CD4-positive, alpha-beta memory T cell (primary cell): ENCODE measurements at regions of chr12 and their contacts with region 1.

Region 1: GRCh38 chr12:93441617-93442410 is at the start of gene UBE2N:
- DNase-seq: peak; percentile 95 to 97 (median 97)
- H3K4me3 ChIP-seq: peak within 1 kb of the TSS; percentile 90 to 98
- H3K4me3 Mint-ChIP-seq: peak within 1 kb of the TSS; percentile 94 to 98 (median 97)
- H3K27ac ChIP-seq: peak within 1 kb of the TSS; percentile 95
- H3K27ac Mint-ChIP-seq: peak within 1 kb of the TSS; percentile 94 to 100 (median 99)
- H3K4me1 ChIP-seq: peaks cover 48% of the 10 kb centered on the region
- H3K4me1 Mint-ChIP-seq: peaks cover 36 to 51% (median 45%) of the 10 kb centered on the region in 4 donors
- H3K27me3 ChIP-seq: no peaks in the 10 kb centered on the region
- H3K27me3 Mint-ChIP-seq: no peaks in the 10 kb centered on the region
- total RNA-seq, gene UBE2N: 71.2 to 72.8 TPM

Region 2: DNA sequence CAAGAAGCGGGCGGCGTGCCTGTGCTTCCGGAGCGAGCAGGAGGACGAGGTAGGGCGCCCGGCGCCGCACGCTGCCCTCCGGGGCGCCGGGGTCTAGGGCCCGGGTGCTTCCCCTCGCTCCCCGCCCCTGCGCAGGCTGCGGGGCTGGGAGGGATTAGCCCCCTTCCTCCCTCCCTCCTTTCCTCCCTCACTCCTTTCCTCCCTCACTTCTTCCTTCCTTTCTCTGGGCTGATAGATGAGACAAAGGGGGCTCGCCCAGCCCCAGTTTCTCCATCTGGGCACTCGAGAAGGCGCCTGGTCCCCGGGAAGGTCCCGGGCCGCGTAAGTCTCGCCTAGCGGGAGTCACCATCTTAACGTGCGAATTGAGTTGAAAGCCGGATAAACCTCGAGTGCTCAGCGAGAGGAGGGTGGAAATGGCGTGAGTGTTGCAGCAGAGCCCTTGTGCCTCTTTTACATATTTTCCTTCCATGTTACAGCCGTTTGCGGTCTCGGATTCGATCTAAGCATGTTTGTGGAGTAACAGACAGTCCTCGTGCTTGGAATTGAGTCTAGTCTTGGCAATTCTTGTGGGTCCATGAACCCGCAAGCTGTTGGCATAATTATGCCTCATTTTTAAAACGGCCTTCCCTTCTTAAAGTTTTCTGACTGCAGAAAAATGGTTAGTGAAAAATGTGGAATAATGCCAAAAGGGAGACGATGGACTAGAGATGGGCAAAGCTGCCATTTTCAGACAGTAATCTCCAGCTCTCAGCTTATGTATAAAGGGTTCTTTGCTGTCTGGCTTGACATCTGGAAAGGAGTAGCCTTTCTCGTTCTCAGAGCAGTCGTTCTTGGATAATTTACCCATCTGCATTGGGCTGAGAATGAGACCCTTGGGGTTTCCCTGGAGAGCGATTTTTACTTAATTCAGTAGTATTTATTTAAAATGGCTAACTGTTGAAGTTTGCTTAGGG is 63.2 kb before region 1 on chr12:
- CTCF ChIA-PET with region 1: interaction called, 4 read pairs
- POLR2A ChIA-PET with region 1: interaction called, 6 read pairs
- intact Hi-C with region 1: loop called (anchors 1 kb)
- DNase-seq: peak; percentile 63 to 73 (median 69)
- H3K4me3 ChIP-seq: peak overlapping the region; percentile 71 to 88
- H3K4me3 Mint-ChIP-seq: peak overlapping the region; percentile 98 to 100 (median 99)
- H3K27ac ChIP-seq: peak overlapping the region; percentile 84
- H3K27ac Mint-ChIP-seq: peak overlapping the region; percentile 96 to 100 (median 99)
- H3K4me1 ChIP-seq: peaks cover 43% of the 10 kb centered on the region
- H3K4me1 Mint-ChIP-seq: peaks cover 28 to 57% (median 43%) of the 10 kb centered on the region in 4 donors
- H3K27me3 ChIP-seq: no peaks in the 10 kb centered on the region
- H3K27me3 Mint-ChIP-seq: no peaks in the 10 kb centered on the region

Region 3: GRCh38 chr12:93403988-93404803 is 37.6 kb before region 1 on chr12:
- CTCF ChIA-PET with region 1: no interaction called
- POLR2A ChIA-PET with region 1: no interaction called
- intact Hi-C with region 1: no loop called
- DNase-seq: no peak
- H3K4me3 ChIP-seq: no peak overlapping the region
- H3K4me3 Mint-ChIP-seq: no peak overlapping the region
- H3K27ac ChIP-seq: no peak overlapping the region
- H3K27ac Mint-ChIP-seq: peak overlapping the region in 2 of 7 donors; percentile 20 to 76
- H3K4me1 ChIP-seq: no peaks in the 10 kb centered on the region
- H3K4me1 Mint-ChIP-seq: peaks cover 0 to 6% (median 2%) of the 10 kb centered on the region in 4 donors
- H3K27me3 ChIP-seq: no peaks in the 10 kb centered on the region
- H3K27me3 Mint-ChIP-seq: no peaks in the 10 kb centered on the region

Region 4: GRCh38 chr12:93427779-93428563 is 13.8 kb before region 1 on chr12:
- CTCF ChIA-PET with region 1: interaction called, 75 read pairs
- POLR2A ChIA-PET with region 1: interaction called, 6 read pairs
- intact Hi-C with region 1: no loop called
- DNase-seq: no peak
- H3K4me3 ChIP-seq: no peak overlapping the region
- H3K4me3 Mint-ChIP-seq: peak overlapping the region in 6 of 8 donors; percentile 21 to 75 (median 38)
- H3K27ac ChIP-seq: no peak overlapping the region
- H3K27ac Mint-ChIP-seq: peak overlapping the region in 5 of 7 donors; percentile 38 to 75 (median 48)
- H3K4me1 ChIP-seq: peaks cover 95% of the 10 kb centered on the region
- H3K4me1 Mint-ChIP-seq: peaks cover 65 to 91% (median 77%) of the 10 kb centered on the region in 4 donors
- H3K27me3 ChIP-seq: no peaks in the 10 kb centered on the region
- H3K27me3 Mint-ChIP-seq: no peaks in the 10 kb centered on the region

Region 5: DNA sequence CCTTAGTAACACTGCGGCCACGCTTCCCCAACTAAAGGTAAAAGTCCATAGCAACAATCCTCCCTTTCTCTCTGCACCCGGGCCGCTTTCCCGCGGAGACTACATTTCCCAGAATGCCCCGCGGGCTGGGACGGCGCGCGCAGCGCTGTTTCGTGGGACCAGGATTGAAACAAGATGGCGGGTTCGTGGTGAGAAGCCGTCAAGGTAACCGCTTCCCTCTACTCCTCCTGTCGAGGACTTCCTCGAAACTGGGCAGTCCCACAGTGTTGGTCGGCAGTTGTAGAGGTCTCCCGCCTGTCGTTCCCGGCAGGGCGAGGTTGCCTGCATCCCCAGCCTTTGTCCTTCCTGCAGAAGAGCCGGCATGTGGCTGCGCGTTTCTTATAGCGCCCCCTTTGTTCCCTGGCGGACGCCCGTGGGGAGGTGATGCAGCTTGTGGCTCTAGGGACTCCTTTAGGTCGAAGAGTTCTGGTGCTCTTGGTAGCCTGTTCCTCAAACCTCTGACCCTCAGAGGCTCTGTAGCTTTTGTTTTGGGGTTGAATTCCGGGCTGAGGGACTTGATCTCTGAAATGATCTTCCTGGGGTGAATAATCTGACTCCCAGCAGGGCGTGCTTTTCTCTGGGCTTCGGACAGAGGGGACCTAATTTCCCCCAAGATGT is 25.7 kb after region 1 on chr12 and contains the start of gene MRPL42:
- CTCF ChIA-PET with region 1: interaction called, 11 read pairs
- POLR2A ChIA-PET with region 1: interaction called, 22 read pairs
- intact Hi-C with region 1: loop called (anchors 1 kb)
- DNase-seq: peak; percentile 91 to 96 (median 92)
- H3K4me3 ChIP-seq: peak within 1 kb of the TSS; percentile 72 to 81
- H3K4me3 Mint-ChIP-seq: peak within 1 kb of the TSS; percentile 88 to 95 (median 92)
- H3K27ac ChIP-seq: peak within 1 kb of the TSS; percentile 82
- H3K27ac Mint-ChIP-seq: peak within 1 kb of the TSS; percentile 92 to 99 (median 96)
- H3K4me1 ChIP-seq: peaks cover 28% of the 10 kb centered on the region
- H3K4me1 Mint-ChIP-seq: peaks cover 24 to 38% (median 32%) of the 10 kb centered on the region in 4 donors
- H3K27me3 ChIP-seq: no peaks in the 10 kb centered on the region
- H3K27me3 Mint-ChIP-seq: no peaks in the 10 kb centered on the region
- total RNA-seq, gene MRPL42: 40.1 to 43.2 TPM